Activated CD4-positive, alpha-beta T cell treated with anti-CD3 and anti-CD28 coated beads, Interleukin-2, amount 10 ng/mL, durations not matched to agents 24 days and 14 days (primary cell): ENCODE measurements at regions of chr19 and their contacts with region 1.

Region 1: GRCh38 chr19:54189735-54190502 is 539 bp upstream of the MBOAT7 start:
- DNase-seq: peak; percentile 100
- H3K4me3 Mint-ChIP-seq: peak overlapping the region; percentile 85
- H3K27ac Mint-ChIP-seq: peak overlapping the region; percentile 98
- H3K4me1 Mint-ChIP-seq: peaks cover 28% of the 10 kb centered on the region
- H3K27me3 Mint-ChIP-seq: no peaks in the 10 kb centered on the region

Region 2: GRCh38 chr19:53892981-53893325 is 297.0 kb before region 1 on chr19:
- intact Hi-C with region 1: no loop called
- DNase-seq: no peak
- H3K4me3 Mint-ChIP-seq: no peak overlapping the region
- H3K27ac Mint-ChIP-seq: no peak overlapping the region
- H3K4me1 Mint-ChIP-seq: peaks cover 3% of the 10 kb centered on the region
- H3K27me3 Mint-ChIP-seq: peaks cover 12% of the 10 kb centered on the region

Region 3: DNA sequence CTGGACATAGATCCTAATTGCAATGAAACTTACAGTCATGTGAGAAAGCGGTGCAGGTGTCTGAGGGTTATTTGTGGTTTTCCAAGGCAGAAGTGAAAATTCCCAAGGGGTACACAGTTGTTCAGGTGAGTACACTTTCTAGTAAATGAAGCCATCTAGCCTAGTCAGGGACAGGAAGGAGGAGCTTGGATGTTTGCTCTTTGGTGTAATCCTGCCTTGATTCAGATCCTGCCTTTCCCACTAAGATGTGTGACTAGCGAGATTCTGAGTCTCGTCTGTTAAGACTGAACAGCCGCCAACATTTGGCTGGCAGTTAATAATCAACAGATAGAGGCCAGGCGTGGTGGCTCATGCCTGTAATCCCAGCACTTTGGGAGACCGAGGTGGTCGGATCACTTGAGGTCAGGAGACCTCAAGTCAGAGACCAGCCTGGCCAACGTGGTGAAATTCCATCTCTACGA is 13.3 kb after region 1 on chr19:
- intact Hi-C with region 1: loop called (anchors 1 kb)
- DNase-seq: no peak
- H3K4me3 Mint-ChIP-seq: peak overlapping the region; percentile 95
- H3K27ac Mint-ChIP-seq: peak overlapping the region; percentile 74
- H3K4me1 Mint-ChIP-seq: peaks cover 67% of the 10 kb centered on the region
- H3K27me3 Mint-ChIP-seq: no peaks in the 10 kb centered on the region

Region 4: DNA sequence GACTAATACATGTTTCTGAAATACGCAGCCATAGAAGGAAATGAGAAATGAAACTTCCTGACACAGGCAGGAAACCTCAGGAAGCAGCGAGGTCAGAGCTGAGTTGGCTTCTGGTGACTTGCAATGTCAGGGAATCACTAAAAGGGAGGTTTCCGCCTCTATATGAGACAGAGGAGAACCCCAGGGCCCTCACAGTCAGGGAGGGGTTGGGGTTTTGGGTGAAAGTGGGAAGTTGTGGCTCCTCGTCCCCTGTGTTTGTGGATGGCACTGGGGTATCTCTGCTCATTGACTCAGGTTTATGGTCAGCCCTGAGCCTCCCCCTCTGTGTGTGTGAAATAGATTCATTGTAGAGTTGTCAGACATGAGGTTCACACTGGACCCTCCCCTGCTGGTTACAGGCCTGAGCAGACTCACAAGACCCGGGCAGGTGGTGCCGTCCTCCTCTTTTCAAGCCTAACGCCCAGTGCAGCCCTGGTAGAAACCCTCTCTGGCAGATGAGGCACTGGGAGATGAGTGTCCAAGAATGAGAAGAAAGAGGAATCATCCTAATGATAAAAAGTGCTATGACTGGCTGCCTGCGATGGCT is 58.2 kb after region 1 on chr19:
- intact Hi-C with region 1: no loop called
- DNase-seq: peak; percentile 70
- H3K4me3 Mint-ChIP-seq: peak overlapping the region; percentile 15
- H3K27ac Mint-ChIP-seq: no peak overlapping the region
- H3K4me1 Mint-ChIP-seq: peaks cover 9% of the 10 kb centered on the region
- H3K27me3 Mint-ChIP-seq: peaks cover 3% of the 10 kb centered on the region